Endothelial cell of umbilical vein (primary cell): ENCODE measurements at regions of chr6 and their contacts with region 1.

Region 1: DNA sequence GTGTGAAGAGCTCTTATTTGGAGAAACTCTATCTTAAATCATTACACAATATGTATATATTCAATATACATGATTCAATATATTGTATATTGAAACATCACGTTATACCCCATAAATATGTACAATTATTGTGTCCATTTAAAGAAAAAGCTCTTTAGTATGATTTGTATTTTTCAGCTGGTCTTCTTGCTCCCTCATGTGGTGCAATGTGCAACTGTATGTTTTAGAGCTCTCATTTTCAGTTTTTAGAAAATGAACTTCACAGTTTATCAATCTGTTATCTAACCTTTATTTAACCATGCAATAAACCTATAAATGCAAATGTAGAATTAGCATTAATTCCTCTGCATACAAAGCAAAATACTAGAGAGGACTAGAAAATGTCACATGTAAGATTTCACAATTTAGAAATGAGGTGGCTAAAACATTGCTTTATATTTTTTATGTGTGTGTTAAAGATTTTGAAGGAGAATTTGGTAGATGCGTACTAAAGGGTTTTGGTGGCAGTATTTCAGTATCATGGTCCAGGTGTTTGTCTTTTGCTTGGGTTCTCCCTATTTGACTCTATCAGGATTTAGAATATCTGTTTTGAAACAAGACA is 167.1 kb downstream of the PHF3 start:
- DNase-seq: peak; percentile 47
- H3K4me3 ChIP-seq: no peak overlapping the region
- H3K27ac ChIP-seq: no peak overlapping the region
- H3K4me1 ChIP-seq: peaks cover 40% of the 10 kb centered on the region
- H3K27me3 ChIP-seq: no peaks in the 10 kb centered on the region
- CTCF ChIP-seq: peak; percentile 41 to 42
- POLR2A ChIP-seq: no peak

Region 2: GRCh38 chr6:63313111-63313510 is 489.6 kb before region 1 on chr6:
- CTCF ChIA-PET with region 1: interaction called, 53 read pairs
- POLR2A ChIA-PET with region 1: no interaction called
- dilution Hi-C with region 1: no loop called
- intact Hi-C with region 1: loop called (anchors 1 kb)
- DNase-seq: no peak
- H3K4me3 ChIP-seq: no peak overlapping the region
- H3K27ac ChIP-seq: no peak overlapping the region
- H3K4me1 ChIP-seq: no peaks in the 10 kb centered on the region
- H3K27me3 ChIP-seq: peaks cover 0 to 4% of the 10 kb centered on the region in 2 experiments
- CTCF ChIP-seq: no peak
- POLR2A ChIP-seq: no peak

Region 3: GRCh38 chr6:63504777-63505384 is 297.8 kb before region 1 on chr6:
- CTCF ChIA-PET with region 1: no interaction called
- POLR2A ChIA-PET with region 1: no interaction called
- dilution Hi-C with region 1: no loop called
- intact Hi-C with region 1: no loop called
- DNase-seq: no peak
- H3K4me3 ChIP-seq: no peak overlapping the region
- H3K27ac ChIP-seq: no peak overlapping the region
- H3K4me1 ChIP-seq: no peaks in the 10 kb centered on the region
- H3K27me3 ChIP-seq: no peaks in the 10 kb centered on the region
- CTCF ChIP-seq: no peak
- POLR2A ChIP-seq: no peak

Region 4: GRCh38 chr6:63571881-63572732 is 230.6 kb before region 1 on chr6 and contains the starts of genes LOC128125822 and PTP4A1:
- CTCF ChIA-PET with region 1: interaction called, 4 read pairs
- POLR2A ChIA-PET with region 1: no interaction called
- dilution Hi-C with region 1: no loop called
- intact Hi-C with region 1: loop called (anchors 1 kb)
- DNase-seq: peak; percentile 97
- H3K4me3 ChIP-seq: peak within 1 kb of the TSS; percentile 13 to 96 (median 88)
- H3K27ac ChIP-seq: peak within 1 kb of the TSS; percentile 61
- H3K4me1 ChIP-seq: peaks cover 18% of the 10 kb centered on the region
- H3K27me3 ChIP-seq: peaks cover 8 to 10% of the 10 kb centered on the region in 2 experiments
- CTCF ChIP-seq: no peak
- POLR2A ChIP-seq: peak; percentile 87
- total RNA-seq, gene PTP4A1: 58.4 and 65.1 TPM in 2 replicates

Region 5: GRCh38 chr6:63635588-63636517 is 166.9 kb before region 1 on chr6 and contains the start of gene PHF3:
- CTCF ChIA-PET with region 1: interaction called, 4 read pairs
- POLR2A ChIA-PET with region 1: no interaction called
- dilution Hi-C with region 1: no loop called
- intact Hi-C with region 1: loop called (anchors 2 kb)
- DNase-seq: peak; percentile 87
- H3K4me3 ChIP-seq: peak within 1 kb of the TSS; percentile 75 to 96 (median 92)
- H3K27ac ChIP-seq: peak within 1 kb of the TSS; percentile 83
- H3K4me1 ChIP-seq: peaks cover 14% of the 10 kb centered on the region
- H3K27me3 ChIP-seq: peaks cover 6 to 12% of the 10 kb centered on the region in 2 experiments
- CTCF ChIP-seq: peak in 1 of 2 donors; percentile 3
- POLR2A ChIP-seq: peak; percentile 60
- total RNA-seq, gene PHF3: 29.6 and 29.9 TPM in 2 replicates

Region 6: GRCh38 chr6:63816982-63817436 is 14.3 kb after region 1 on chr6:
- CTCF ChIA-PET with region 1: interaction called, 22 read pairs
- POLR2A ChIA-PET with region 1: no interaction called
- dilution Hi-C with region 1: no loop called
- intact Hi-C with region 1: no loop called
- DNase-seq: no peak
- H3K4me3 ChIP-seq: no peak overlapping the region
- H3K27ac ChIP-seq: no peak overlapping the region
- H3K4me1 ChIP-seq: no peaks in the 10 kb centered on the region
- H3K27me3 ChIP-seq: peaks cover 0 to 3% of the 10 kb centered on the region in 2 experiments
- CTCF ChIP-seq: peak in 1 of 2 donors; percentile 11
- POLR2A ChIP-seq: no peak